ENCODE measurements at regions of chr2 and their contacts with region 1.

Region 1: GRCh38 chr2:216404010-216404618 is 8.2 kb upstream of the SMARCAL1 start:
- DNase-seq: peak; percentile 20 to 33
- ATAC-seq: peak; percentile 58 to 84; a peak in 4 of 6 replicates
- H3K4me3 ChIP-seq: no peak overlapping the region
- H3K27ac ChIP-seq: no peak overlapping the region
- H3K4me1 ChIP-seq: no peaks in the 10 kb centered on the region
- CTCF ChIP-seq: peak; percentile 61
- EP300 ChIP-seq: no peak
- POLR2A ChIP-seq: no peak
- RAD21 ChIP-seq: peak; percentile 60 to 76

Region 2: GRCh38 chr2:216222650-216223352 is 181.3 kb before region 1 on chr2:
- CTCF ChIA-PET with region 1: interaction called, 18 read pairs
- POLR2A ChIA-PET with region 1: no interaction called
- DNase-seq: peak in 1 of 2 experiments; percentile 26
- ATAC-seq: peak; percentile 12 to 55; a peak in 3 of 6 replicates
- H3K4me3 ChIP-seq: no peak overlapping the region
- H3K27ac ChIP-seq: no peak overlapping the region
- H3K4me1 ChIP-seq: peaks cover 9% of the 10 kb centered on the region; the same call in 1 of the 3 replicates
- CTCF ChIP-seq: peak; percentile 30
- EP300 ChIP-seq: no peak
- POLR2A ChIP-seq: no peak
- RAD21 ChIP-seq: peak; percentile 54 to 70

Region 3: DNA sequence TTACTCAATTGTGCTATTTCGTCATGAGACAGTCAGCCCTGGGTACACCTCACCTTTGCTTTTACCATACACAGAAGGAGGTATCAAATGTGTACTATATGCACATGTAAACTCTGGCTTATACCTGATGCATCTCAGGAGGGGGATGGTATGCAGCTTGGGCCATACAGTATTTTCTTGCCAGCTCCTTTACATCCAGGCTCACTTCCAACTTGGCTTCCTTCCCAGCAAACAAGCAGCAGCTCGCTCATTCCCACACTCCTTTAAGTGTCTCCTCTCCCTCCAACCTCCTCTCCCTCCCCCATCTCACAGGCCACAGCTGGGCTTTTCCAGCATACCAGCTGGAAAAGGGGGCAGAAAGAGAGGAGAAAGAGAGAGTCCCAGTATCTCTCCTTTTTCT is 41.4 kb before region 1 on chr2:
- CTCF ChIA-PET with region 1: interaction called, 14 read pairs
- POLR2A ChIA-PET with region 1: no interaction called
- DNase-seq: peak in 1 of 2 experiments; percentile 23
- ATAC-seq: peak; percentile 20 to 60; a peak in 4 of 6 replicates
- H3K4me3 ChIP-seq: no peak overlapping the region
- H3K27ac ChIP-seq: peak overlapping the region in 1 of 2 experiments; percentile 9; a peak in 1 of 6 replicates
- H3K4me1 ChIP-seq: peaks cover 17% of the 10 kb centered on the region
- CTCF ChIP-seq: no peak
- EP300 ChIP-seq: no peak
- POLR2A ChIP-seq: no peak
- RAD21 ChIP-seq: no peak

Region 4: GRCh38 chr2:216371756-216372702 is 32.1 kb before region 1 on chr2 and contains the start of gene MARCHF4:
- CTCF ChIA-PET with region 1: interaction called, 23 read pairs
- POLR2A ChIA-PET with region 1: no interaction called
- DNase-seq: peak; percentile 48 to 78
- ATAC-seq: peak; percentile 71 to 77
- H3K4me3 ChIP-seq: peak within 1 kb of the TSS; percentile 64
- H3K27ac ChIP-seq: peak within 1 kb of the TSS; percentile 61 to 87
- H3K4me1 ChIP-seq: peaks cover 50% of the 10 kb centered on the region
- CTCF ChIP-seq: no peak
- EP300 ChIP-seq: no peak
- POLR2A ChIP-seq: no peak; the same call in 1 of the 2 replicates
- RAD21 ChIP-seq: peak; percentile 13 to 33; a peak in 3 of 5 replicates
- polyA plus RNA-seq, gene MARCHF4: 1.7 TPM in 2 replicates

Region 5: DNA sequence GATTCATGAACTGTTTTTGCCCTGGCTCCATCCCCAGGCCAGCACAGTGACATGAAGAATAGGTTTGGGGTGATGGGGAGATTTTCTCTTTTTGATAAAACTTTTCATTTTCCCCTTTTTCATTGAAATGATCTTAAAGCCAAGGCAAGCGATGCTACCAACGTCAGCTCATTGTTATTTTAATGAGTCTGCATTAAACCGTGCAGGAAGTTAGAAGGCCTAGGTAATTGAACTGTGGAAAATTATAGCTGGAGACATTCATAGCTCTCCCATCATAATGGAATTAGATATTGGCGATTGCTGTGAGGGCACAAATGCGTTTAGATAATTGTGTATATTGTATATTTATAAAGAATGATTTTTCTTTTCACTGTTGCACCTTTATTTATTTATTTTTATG is 41.4 kb after region 1 on chr2:
- CTCF ChIA-PET with region 1: no interaction called
- POLR2A ChIA-PET with region 1: no interaction called
- DNase-seq: no peak
- ATAC-seq: no peak
- H3K4me3 ChIP-seq: no peak overlapping the region
- H3K27ac ChIP-seq: no peak overlapping the region
- H3K4me1 ChIP-seq: no peaks in the 10 kb centered on the region
- CTCF ChIP-seq: no peak
- EP300 ChIP-seq: no peak
- POLR2A ChIP-seq: no peak
- RAD21 ChIP-seq: no peak

Region 6: DNA sequence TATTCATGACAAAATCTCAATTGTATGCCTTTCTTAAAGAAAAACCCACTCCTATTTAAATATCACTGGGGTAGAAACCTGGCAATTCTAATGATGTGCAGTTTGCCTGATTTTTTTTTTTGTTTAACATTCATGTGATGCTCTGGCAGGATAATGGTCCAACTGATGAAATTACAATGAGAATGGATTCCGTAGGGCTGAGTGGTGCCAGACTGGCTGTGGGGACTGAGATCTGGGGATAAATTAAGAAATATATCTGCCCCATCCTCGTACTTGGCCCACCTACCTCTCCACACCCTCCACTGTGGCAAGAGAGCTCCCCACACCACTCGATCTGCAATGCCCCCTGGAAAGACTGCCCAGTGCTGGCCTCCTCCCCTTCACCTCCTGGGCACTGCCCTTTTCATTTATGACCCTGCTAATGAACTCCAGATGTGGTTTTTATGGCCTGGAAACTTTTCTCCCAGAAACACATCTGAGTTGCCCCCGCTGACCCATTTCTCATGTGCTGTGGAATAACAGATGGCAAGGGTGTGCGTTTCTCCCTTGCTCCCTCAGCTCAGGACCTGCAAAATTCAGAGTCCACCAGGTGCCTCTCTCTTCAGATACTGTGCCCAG is 61.6 kb after region 1 on chr2:
- CTCF ChIA-PET with region 1: no interaction called
- POLR2A ChIA-PET with region 1: no interaction called
- DNase-seq: no peak
- ATAC-seq: no peak
- H3K4me3 ChIP-seq: no peak overlapping the region
- H3K27ac ChIP-seq: no peak overlapping the region
- H3K4me1 ChIP-seq: no peaks in the 10 kb centered on the region
- CTCF ChIP-seq: no peak
- EP300 ChIP-seq: no peak
- POLR2A ChIP-seq: no peak
- RAD21 ChIP-seq: no peak

Region 7: DNA sequence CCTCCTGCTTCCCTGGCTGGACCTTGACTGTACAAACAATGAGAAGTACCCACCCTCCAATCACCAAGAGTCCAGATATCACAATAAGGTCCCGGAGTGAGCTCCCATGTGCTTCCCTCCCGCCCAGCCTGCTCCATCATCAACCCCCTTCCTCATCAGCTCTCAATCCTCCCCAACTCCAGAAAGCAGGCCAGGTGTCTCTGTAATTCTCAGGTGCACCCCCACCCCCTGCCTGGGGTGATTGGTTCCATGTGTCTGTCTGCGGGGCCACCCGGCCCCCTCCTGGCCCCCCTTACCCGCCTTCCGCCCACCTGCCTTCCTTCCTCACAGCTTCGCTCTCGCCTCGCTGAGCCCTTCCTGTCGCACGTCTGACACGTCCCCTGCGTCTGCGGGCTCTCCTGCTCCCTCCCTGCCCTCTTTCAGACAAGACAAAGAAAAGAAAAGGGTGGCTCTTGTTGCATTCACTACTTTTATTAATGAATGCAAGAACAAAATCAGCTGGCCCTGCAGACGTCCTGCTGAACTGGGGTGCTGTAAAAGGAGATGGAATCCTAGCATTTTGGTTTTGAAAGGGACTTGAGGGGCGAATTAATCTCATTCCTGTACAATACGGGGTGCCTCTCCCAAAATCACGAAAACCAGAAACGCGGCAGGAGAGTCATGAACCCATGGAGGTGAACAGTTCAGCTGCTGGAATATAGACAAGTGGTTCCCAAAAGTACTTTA is 202.6 kb after region 1 on chr2:
- CTCF ChIA-PET with region 1: no interaction called
- POLR2A ChIA-PET with region 1: no interaction called
- DNase-seq: no peak
- ATAC-seq: no peak
- H3K4me3 ChIP-seq: no peak overlapping the region
- H3K27ac ChIP-seq: no peak overlapping the region
- H3K4me1 ChIP-seq: 0 out of 3 replicates have a peak, but pooled peaks cover 7% of the 10 kb centered on the region
- CTCF ChIP-seq: no peak
- EP300 ChIP-seq: no peak
- POLR2A ChIP-seq: no peak
- RAD21 ChIP-seq: no peak